A549 (cell line): ENCODE measurements at regions of chr17 and their contacts with region 1.

Region 1: DNA sequence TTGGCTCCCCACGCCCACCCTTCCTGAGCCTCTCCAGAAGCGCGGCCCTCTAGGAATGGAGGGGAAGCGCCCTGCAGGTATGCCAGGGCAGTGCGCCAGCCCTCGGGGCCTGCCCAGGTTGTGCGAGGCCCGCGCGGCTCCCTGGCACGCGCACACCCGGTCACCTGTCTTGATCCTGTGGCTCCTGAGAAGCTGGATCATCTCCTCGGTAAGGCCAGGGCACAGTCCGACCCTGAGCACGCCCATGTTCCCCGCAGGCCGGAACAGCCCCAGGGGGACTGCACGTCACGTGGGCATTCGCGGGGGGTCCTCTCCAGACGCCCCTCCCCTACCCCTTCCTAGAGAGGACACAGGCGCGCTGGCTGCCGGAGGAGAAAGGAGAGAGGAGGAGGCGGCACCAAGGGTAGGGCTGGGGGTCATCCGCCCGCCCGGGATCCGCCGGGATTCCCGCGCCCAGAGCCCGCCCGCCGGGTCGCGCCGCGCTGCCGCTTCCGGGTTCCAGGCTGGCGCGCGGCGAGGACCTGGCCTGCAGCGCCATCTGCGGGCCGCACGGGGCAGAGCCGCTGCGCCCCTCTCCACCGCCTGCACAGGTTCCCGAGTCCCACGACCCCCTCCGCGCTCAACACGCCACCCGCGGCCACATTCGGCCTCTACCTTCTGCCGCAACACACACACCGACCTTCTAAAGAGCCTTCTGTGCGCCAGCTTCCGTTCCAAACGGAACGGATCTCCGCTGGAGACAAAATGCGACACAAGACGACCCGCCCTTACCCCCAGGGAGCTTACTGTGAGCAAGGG is at the start of gene RAD51D:
- DNase-seq: peak; percentile 81 to 83
- ATAC-seq: peak; percentile 85 to 92
- H3K4me3 ChIP-seq: peak within 1 kb of the TSS; percentile 71
- H3K27ac ChIP-seq: peak within 1 kb of the TSS; percentile 91 to 94
- H3K4me1 ChIP-seq: peaks cover 27% of the 10 kb centered on the region
- CTCF ChIP-seq: peak; percentile 98
- EP300 ChIP-seq: no peak
- POLR2A ChIP-seq: peak; percentile 52; the same call in 1 of the 2 replicates
- RAD21 ChIP-seq: peak; percentile 86 to 100
- polyA plus RNA-seq, gene RAD51D: 18.4 and 21.0 TPM in 2 replicates

Region 2: DNA sequence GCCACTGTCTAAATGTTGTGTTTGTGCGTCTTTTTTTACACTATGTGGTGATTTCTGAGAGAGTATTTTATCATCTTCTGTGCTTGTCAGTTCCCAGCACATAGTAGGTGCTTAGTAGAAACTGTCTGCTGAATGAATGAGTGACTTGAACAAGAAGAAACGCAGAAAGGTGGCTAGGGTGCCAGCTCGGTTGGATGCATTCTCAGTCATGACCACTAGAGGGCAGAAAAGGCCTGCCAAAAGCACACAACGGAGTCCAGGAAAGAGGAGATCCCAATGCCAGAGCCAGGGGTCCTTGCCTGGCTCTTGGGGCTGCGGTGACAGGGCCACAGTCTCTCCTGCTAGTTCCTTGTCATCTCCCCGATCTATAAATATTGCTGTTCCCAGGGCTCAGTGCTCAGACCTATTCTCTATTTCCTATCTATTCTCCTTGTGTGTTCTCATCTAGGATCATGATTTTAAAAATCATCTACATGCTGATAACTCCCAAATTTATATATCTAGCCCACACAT is 699.3 kb before region 1 on chr17:
- CTCF ChIA-PET with region 1: interaction called, 35 read pairs
- POLR2A ChIA-PET with region 1: no interaction called
- DNase-seq: peak; percentile 66 to 81
- ATAC-seq: peak; percentile 60 to 89; a peak in 5 of 6 replicates
- H3K4me3 ChIP-seq: no peak overlapping the region
- H3K27ac ChIP-seq: no peak overlapping the region
- H3K4me1 ChIP-seq: no peaks in the 10 kb centered on the region
- CTCF ChIP-seq: peak; percentile 91
- EP300 ChIP-seq: no peak
- POLR2A ChIP-seq: no peak
- RAD21 ChIP-seq: peak; percentile 91 to 96

Region 3: GRCh38 chr17:34961093-34961911 is 158.3 kb before region 1 on chr17 and contains the starts of genes CCT6B and ZNF830:
- CTCF ChIA-PET with region 1: interaction called, 10 read pairs
- POLR2A ChIA-PET with region 1: no interaction called
- DNase-seq: peak; percentile 97
- ATAC-seq: peak; percentile 96 to 97
- H3K4me3 ChIP-seq: peak within 1 kb of the TSS; percentile 75
- H3K27ac ChIP-seq: peak within 1 kb of the TSS; percentile 85 to 93
- H3K4me1 ChIP-seq: peaks cover 12% of the 10 kb centered on the region; the same call in 2 of the 3 replicates
- CTCF ChIP-seq: no peak
- EP300 ChIP-seq: no peak
- POLR2A ChIP-seq: peak; percentile 90
- RAD21 ChIP-seq: no peak
- polyA plus RNA-seq, gene CCT6B: 1.9 and 3.1 TPM in 2 replicates
- polyA plus RNA-seq, gene ZNF830: 12.6 and 21.2 TPM in 2 replicates

Region 4: DNA sequence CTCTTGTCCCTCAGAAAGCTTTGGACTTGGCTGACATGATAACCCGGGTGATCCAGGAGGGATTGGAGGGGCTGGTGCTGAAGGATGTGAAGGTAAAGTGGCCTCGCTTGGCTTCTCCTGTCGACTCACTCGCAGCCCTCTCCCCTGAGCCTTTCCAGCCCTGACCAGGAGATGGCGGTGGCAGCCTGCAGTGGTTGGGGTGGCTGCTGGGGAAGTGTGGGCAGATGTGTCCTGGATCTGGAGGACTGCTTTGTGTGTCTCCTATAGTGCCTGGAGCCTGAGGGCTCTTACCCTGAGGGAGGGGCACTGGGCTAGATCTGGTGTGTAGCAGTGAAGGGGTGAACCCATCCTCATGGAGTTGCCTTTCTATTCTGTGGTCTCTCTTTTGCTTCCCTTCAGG is 121.4 kb before region 1 on chr17:
- CTCF ChIA-PET with region 1: interaction called, 297 read pairs
- POLR2A ChIA-PET with region 1: no interaction called
- DNase-seq: peak; percentile 78 to 95
- ATAC-seq: peak; percentile 90
- H3K4me3 ChIP-seq: no peak overlapping the region
- H3K27ac ChIP-seq: peak overlapping the region; percentile 25 to 55; a peak in 4 of 6 replicates
- H3K4me1 ChIP-seq: peaks cover 3% of the 10 kb centered on the region; the same call in 1 of the 3 replicates
- CTCF ChIP-seq: peak; percentile 92
- EP300 ChIP-seq: no peak
- POLR2A ChIP-seq: no peak
- RAD21 ChIP-seq: peak; percentile 97 to 99

Region 5: DNA sequence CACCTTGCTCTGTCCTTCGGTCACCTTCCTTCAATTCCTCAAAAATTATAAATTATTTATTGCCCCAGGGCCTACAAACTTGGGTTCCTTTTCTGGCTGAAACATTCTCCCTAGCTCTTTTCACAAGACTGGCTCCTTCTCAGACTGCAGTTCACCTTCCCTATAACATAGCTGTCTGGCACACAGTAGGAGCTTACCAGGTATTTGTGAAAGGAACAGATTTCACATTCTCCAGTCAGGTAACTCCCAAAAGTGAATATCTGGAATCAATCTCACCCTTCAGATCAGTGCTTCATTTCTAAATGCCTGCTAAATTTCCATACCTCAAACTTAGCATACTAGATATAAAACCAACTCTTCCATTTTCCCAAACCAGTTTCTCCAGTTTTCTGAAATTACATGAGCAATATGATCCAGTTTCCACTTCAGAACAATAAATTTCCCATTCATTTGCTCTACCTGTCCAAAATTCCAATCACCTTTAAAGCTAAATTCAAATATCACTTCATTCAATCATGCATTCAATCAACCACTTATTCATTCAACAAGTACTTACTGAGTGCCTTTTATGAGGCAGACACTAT is 62.1 kb before region 1 on chr17:
- CTCF ChIA-PET with region 1: interaction called, 13 read pairs
- POLR2A ChIA-PET with region 1: no interaction called
- DNase-seq: no peak
- ATAC-seq: no peak
- H3K4me3 ChIP-seq: no peak overlapping the region
- H3K27ac ChIP-seq: 0 out of 6 replicates have a peak overlapping the region, but pooled peaks of 1 of the 2 experiments have one; percentile 0
- H3K4me1 ChIP-seq: peaks cover 20% of the 10 kb centered on the region
- CTCF ChIP-seq: no peak
- EP300 ChIP-seq: no peak
- POLR2A ChIP-seq: no peak
- RAD21 ChIP-seq: no peak

Region 6: DNA sequence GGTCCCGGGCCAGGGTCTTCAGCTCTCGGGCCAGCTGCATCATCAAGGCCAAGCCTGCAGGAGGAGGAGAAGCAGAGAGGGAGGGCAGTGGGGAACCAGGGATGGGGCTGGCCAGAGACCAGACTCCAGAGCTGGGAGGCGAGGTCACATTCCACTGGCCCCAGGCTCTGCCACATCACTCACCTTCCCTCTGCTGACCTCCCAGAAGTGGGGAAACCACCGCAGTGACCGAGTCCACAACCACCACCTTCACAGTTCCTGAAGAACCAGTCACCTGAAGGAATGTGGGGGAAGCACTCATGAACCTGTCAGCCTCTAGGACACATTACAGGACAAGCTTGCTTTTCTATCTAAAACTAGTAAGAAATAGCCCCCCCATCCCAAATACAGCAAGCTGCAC is 16.3 kb before region 1 on chr17:
- CTCF ChIA-PET with region 1: interaction called, 49 read pairs
- POLR2A ChIA-PET with region 1: interaction called, 3 read pairs
- DNase-seq: no peak
- ATAC-seq: no peak
- H3K4me3 ChIP-seq: no peak overlapping the region
- H3K27ac ChIP-seq: no peak overlapping the region
- H3K4me1 ChIP-seq: no peaks in the 10 kb centered on the region
- CTCF ChIP-seq: no peak
- EP300 ChIP-seq: no peak
- POLR2A ChIP-seq: no peak
- RAD21 ChIP-seq: no peak

Region 7: GRCh38 chr17:35286120-35286781 is 166.7 kb after region 1 on chr17:
- CTCF ChIA-PET with region 1: no interaction called
- POLR2A ChIA-PET with region 1: no interaction called
- DNase-seq: no peak
- ATAC-seq: no peak
- H3K4me3 ChIP-seq: no peak overlapping the region
- H3K27ac ChIP-seq: no peak overlapping the region
- H3K4me1 ChIP-seq: no peaks in the 10 kb centered on the region
- CTCF ChIP-seq: no peak
- EP300 ChIP-seq: no peak
- POLR2A ChIP-seq: no peak
- RAD21 ChIP-seq: no peak